ENCODE measurements at regions of chr4 and their contacts with region 1.

Region 1: DNA sequence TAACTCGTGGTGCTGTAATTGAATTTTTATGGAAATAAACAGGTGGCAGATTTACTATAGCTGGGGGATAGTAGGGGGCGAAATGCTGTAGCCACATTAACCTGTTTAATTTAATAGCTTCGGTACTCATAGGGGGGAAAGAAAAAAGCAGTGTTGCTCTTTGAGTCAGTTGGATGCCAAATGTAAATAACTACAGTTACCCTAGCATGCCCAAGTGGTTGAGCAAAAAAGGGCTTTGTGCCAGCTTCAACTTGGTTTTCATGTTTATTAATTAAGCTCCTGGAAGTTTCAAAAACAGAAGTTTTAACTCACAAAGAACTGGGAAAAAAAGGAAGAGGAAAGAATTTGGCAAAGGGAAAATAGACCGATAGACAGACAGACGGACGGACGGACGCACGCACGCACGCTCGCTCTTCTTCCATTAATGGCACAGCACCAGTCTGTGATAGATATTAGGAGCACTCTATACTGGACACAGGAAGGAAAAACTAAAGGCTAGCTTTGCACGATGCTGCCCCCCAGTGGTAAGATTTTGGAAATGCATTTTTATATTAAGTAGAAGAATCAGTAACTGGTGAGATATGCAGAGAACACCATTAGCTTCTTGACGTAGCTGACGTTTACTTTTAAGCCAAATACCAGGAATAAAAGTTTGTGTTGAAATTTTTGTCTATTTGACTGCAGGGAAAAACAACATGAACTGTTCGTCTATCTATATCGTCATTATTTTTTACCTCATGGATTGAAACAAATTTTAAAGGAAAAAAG is 151.8 kb downstream of the SLC7A11 start:
- DNase-seq: peak; percentile 78
- H3K4me3 ChIP-seq: peak overlapping the region; percentile 34 to 40
- H3K27ac ChIP-seq: no peak overlapping the region
- H3K4me1 ChIP-seq: no peaks in the 10 kb centered on the region; a peak in 2 of 4 replicates
- H3K27me3 ChIP-seq: no peaks in the 10 kb centered on the region
- CTCF ChIP-seq: peak; percentile 81
- EP300 ChIP-seq: 0 out of 4 replicates have a peak, but pooled peaks of 1 of the 2 experiments have one; percentile 22
- RAD21 ChIP-seq: peak; percentile 89

Region 2: DNA sequence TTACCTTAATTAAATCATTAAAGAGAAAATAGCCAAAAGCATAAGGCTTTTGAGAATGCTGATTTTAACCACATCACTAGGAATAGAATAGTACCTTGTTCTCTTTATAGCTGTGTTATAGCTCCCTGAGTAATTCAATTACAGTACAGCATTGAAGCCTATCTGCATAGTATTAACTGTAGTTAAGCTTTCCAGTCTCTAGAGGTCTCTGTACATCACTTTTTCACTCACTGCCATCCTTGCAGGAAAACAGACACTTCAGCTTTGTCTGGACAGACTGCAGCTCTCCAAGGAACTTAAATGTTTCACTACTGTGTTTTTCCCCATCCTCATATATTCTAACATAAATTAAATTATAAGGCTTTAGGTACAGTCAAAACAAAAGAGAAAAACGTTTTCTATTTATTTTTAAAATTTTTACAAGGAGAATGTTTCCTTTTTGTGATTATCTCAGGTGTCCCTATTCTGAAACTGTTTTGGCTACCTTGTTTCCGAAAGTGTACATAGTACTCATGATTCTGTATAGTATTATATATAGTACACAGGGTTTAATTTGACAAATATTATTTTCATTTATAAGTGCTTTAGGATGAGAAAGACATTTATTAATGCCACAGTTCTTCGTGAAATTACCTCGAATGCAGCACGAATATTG is 965.9 kb before region 1 on chr4:
- CTCF ChIA-PET with region 1: interaction called, 21 read pairs
- POLR2A ChIA-PET with region 1: no interaction called
- DNase-seq: peak; percentile 42
- H3K4me3 ChIP-seq: no peak overlapping the region
- H3K27ac ChIP-seq: no peak overlapping the region; a peak in 1 of 4 replicates
- H3K4me1 ChIP-seq: peaks cover 0 to 9% of the 10 kb centered on the region in 2 experiments; a peak in 2 of 4 replicates
- H3K27me3 ChIP-seq: no peaks in the 10 kb centered on the region
- CTCF ChIP-seq: peak; percentile 80
- EP300 ChIP-seq: no peak
- RAD21 ChIP-seq: peak; percentile 96

Region 3: GRCh38 chr4:138035781-138036258 is 54.5 kb before region 1 on chr4:
- CTCF ChIA-PET with region 1: interaction called, 33 read pairs
- POLR2A ChIA-PET with region 1: no interaction called
- DNase-seq: peak; percentile 59
- H3K4me3 ChIP-seq: no peak overlapping the region; a peak in 1 of 4 replicates
- H3K27ac ChIP-seq: no peak overlapping the region
- H3K4me1 ChIP-seq: no peaks in the 10 kb centered on the region; a peak in 1 of 4 replicates
- H3K27me3 ChIP-seq: no peaks in the 10 kb centered on the region
- CTCF ChIP-seq: peak; percentile 83
- EP300 ChIP-seq: no peak
- RAD21 ChIP-seq: peak; percentile 90

Region 4: DNA sequence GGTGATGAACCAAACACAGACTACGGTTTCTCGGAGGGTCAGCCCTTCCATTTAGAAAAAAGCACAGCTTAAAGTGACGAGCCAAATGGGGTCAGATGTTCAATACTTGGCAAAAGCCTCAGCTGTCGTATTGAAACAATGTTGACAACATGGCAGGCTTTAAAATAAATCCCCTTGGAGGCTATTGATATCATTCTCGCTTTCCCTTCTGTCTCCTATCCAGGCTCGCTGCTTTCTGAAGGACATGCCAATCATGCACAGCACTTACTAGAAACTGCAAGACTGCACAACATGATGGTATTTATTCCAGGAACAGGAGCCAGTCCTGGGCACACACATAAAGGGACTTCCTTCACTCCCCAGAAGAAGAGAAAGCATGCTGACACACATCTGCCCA is 13.9 kb after region 1 on chr4:
- CTCF ChIA-PET with region 1: interaction called, 42 read pairs
- POLR2A ChIA-PET with region 1: no interaction called
- DNase-seq: no peak
- H3K4me3 ChIP-seq: no peak overlapping the region
- H3K27ac ChIP-seq: no peak overlapping the region
- H3K4me1 ChIP-seq: no peaks in the 10 kb centered on the region; a peak in 1 of 4 replicates
- H3K27me3 ChIP-seq: no peaks in the 10 kb centered on the region
- CTCF ChIP-seq: no peak
- EP300 ChIP-seq: no peak
- RAD21 ChIP-seq: no peak

Region 5: DNA sequence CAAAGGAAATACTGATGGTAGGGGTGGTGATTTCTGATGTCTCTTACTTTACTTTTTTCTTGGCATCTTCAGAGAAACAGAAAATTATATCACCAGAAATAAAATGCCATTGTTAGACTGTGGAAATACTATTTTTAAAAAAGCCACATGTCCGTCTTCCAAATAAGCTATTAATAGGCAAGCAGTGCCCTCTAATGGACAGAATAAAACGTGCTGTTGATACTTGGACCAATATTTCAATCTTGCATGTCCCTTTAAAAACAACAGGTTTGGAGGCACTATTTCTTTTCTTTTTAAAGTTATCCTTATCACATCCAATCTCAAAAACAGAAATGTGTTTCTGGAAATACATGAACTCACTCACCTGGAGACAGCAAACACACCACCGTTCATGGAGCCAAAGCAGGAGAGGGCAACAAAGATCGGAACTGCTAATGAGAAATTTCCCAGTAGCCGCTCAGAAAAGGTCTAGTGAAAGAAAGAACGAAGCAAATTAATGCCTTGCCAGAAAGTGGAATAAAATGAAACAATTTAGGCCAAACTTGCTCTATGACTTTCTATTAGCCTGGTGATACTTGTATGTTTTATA is 92.6 kb after region 1 on chr4:
- CTCF ChIA-PET with region 1: interaction called, 21 read pairs
- POLR2A ChIA-PET with region 1: no interaction called
- DNase-seq: peak; percentile 10
- H3K4me3 ChIP-seq: no peak overlapping the region
- H3K27ac ChIP-seq: no peak overlapping the region
- H3K4me1 ChIP-seq: peaks cover 0 to 2% of the 10 kb centered on the region in 2 experiments; a peak in 1 of 4 replicates
- H3K27me3 ChIP-seq: no peaks in the 10 kb centered on the region
- CTCF ChIP-seq: peak; percentile 85
- EP300 ChIP-seq: no peak
- RAD21 ChIP-seq: peak; percentile 90

Measured in SK-N-SH (cell line).